ENCODE measurements at regions of chr1 and their contacts with region 1.

Region 1: GRCh38 chr1:209207701-209208286 is 375.7 kb upstream of the CAMK1G start:
- DNase-seq: peak; percentile 75
- H3K4me3 ChIP-seq: no peak overlapping the region
- H3K27ac ChIP-seq: no peak overlapping the region
- H3K4me1 ChIP-seq: no peaks in the 10 kb centered on the region
- H3K27me3 ChIP-seq: peaks cover 87% of the 10 kb centered on the region
- CTCF ChIP-seq: peak; percentile 79

Region 2: DNA sequence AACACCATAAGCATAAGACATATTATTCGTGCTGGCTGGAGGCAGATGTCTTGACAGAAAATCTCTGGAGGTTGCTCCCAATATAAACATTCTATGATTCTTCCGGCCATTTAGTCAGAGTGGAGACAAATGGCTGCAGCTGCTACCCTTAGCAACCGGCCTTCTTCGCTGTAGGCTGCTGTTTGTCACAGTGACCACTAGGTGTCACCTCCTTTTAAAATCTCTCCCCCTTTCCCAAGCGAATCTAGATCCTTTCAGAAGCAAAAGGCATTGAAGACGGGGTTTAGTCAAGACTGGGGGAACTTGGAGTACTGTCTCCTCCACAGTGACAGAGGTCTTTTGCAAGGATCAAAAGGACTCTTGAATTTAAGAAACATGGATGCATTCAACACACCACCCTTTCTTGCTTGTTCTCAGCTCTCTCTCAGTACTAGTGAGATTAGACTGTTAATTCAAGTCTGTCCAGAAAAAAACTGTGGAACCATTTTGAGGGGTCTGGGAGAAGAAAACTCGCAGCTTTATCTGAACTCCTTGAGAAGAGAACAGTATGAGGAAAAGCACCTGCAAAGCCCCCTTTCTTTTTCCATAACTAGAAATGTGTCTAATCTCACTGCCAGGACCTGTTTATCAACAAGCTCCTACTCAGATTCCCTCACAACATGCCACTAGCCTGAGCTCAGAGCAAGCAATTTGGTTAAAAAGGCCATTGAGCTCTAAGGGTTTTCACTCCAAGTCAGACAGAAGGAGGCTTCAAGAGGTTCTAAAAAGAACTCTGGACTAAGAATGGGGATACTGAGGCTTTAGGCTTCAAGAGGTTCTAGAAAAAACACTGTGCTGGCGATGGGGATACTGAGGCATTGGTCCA is 555.3 kb before region 1 on chr1:
- CTCF ChIA-PET with region 1: interaction called, 3 read pairs
- POLR2A ChIA-PET with region 1: no interaction called
- intact Hi-C with region 1: loop called (anchors 1 kb)
- DNase-seq: peak; percentile 74
- H3K4me3 ChIP-seq: no peak overlapping the region
- H3K27ac ChIP-seq: no peak overlapping the region
- H3K4me1 ChIP-seq: no peaks in the 10 kb centered on the region
- H3K27me3 ChIP-seq: peaks cover 4% of the 10 kb centered on the region
- CTCF ChIP-seq: peak; percentile 84

Region 3: DNA sequence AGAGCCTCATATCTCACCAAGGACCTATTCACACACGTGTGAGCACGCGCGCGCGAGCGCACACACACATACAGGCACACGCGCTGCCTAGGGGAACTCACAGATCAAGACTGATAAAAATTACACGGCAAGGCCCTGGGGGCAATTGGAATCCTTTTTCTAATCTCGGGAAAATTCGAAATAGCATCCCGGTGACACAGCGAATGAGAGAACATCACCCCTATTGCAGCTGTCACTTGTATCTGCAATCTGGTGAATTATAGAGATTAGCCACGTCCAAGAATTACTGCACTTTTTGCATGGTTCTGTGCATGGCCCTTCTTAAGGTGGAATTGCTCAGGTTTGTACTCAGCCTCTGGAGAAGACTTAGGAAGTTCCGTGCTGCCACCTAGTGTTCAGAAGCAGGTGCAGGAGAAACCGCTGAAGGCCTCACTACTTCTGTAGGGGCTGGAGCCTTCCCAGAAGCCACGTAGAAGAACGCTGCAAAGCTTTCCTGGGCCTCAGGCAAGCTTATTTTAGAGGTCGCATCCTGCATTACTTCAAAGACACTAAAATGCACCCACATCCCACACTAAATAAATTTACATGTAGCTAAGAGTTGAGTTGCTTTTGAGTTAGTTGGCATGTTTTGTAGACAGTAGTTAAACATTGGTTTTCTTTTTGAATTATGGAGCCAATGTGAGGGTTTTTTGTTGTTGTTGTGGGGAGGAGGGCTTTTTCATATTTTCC is 146.5 kb after region 1 on chr1:
- CTCF ChIA-PET with region 1: no interaction called
- POLR2A ChIA-PET with region 1: no interaction called
- intact Hi-C with region 1: loop called (anchors 5 kb)
- DNase-seq: peak; percentile 86
- H3K4me3 ChIP-seq: no peak overlapping the region
- H3K27ac ChIP-seq: no peak overlapping the region
- H3K4me1 ChIP-seq: no peaks in the 10 kb centered on the region
- H3K27me3 ChIP-seq: no peaks in the 10 kb centered on the region
- CTCF ChIP-seq: peak; percentile 92

Region 4: DNA sequence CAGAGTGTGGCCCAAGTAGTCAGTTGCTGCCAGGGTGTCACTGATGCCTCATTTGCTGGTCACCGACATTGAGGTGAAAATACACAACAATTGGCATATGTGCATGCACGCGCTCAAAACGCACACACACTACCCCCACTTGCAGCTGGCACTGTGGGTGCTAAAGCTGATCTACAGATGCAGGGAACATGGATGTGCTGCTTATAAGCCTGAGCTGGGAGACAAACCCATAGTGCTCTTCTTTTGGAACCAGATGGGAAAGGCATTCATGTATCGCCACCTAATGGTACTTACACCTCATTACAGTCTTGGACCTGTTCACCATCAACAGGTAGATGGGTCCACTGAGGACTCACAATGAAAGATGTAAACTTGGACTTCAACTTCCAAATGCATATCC is 305.4 kb after region 1 on chr1:
- CTCF ChIA-PET with region 1: interaction called, 3 read pairs
- POLR2A ChIA-PET with region 1: no interaction called
- intact Hi-C with region 1: loop called (anchors 10 kb)
- DNase-seq: peak; percentile 59
- H3K4me3 ChIP-seq: no peak overlapping the region
- H3K27ac ChIP-seq: no peak overlapping the region
- H3K4me1 ChIP-seq: no peaks in the 10 kb centered on the region
- H3K27me3 ChIP-seq: peaks cover 38% of the 10 kb centered on the region
- CTCF ChIP-seq: peak; percentile 82

Region 5: DNA sequence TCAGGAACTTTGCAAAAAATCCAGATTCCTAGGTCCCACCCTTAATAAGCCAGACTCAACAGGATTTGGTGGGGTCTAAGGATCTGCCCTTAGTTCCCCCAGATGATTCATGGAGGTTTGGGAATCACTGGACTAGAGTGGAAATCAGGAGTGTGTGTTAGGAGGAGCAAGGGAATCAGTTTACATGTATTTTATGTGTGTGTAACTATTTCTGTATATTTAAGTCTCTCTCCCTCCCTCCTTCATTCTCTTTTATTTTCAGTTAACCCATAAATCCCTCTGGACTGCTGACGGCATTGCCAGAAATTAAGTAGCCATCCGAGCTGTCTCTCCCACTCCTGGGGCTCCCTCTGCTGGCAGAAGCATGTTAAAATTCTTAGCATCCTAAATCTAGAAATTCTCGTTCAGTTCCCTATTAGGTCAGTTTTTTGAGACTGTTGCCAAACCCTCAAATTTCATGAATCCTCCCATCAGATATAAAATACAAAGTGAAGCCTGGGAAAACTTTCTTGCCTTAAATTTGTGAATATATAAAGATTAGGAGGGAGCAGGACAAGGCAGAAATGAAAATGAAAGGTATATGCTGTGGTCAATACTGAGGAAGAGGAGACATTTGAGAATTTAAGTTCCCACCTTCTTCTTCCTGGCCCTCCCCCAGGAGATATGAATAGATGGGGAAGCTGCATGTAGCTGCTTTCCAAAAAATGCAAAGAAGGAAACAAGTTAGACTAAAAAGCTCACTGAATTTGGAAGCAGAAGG is 485.1 kb after region 1 on chr1:
- CTCF ChIA-PET with region 1: no interaction called
- POLR2A ChIA-PET with region 1: no interaction called
- intact Hi-C with region 1: loop called (anchors 10 kb)
- DNase-seq: peak; percentile 95
- H3K4me3 ChIP-seq: no peak overlapping the region
- H3K27ac ChIP-seq: peak overlapping the region; percentile 50
- H3K4me1 ChIP-seq: peaks cover 46% of the 10 kb centered on the region
- H3K27me3 ChIP-seq: no peaks in the 10 kb centered on the region
- CTCF ChIP-seq: peak; percentile 95